T-cell (primary cell): ENCODE measurements at regions of chr2 and their contacts with region 1.

Region 1: GRCh38 chr2:100615471-100615870 is 52.7 kb downstream of the PDCL3 start:
- DNase-seq: no peak
- ATAC-seq: no peak
- H3K4me3 ChIP-seq: no peak overlapping the region
- H3K4me3 Mint-ChIP-seq: no peak overlapping the region
- H3K27ac ChIP-seq: no peak overlapping the region
- H3K27ac Mint-ChIP-seq: no peak overlapping the region
- H3K4me1 ChIP-seq: peaks cover 0 to 2% of the 10 kb centered on the region in 2 experiments
- H3K4me1 Mint-ChIP-seq: peaks cover 4 to 22% (median 8%) of the 10 kb centered on the region in 3 donors
- H3K27me3 ChIP-seq: peaks cover 0 to 13% of the 10 kb centered on the region in 2 experiments
- H3K27me3 Mint-ChIP-seq: no peaks in the 10 kb centered on the region

Region 2: DNA sequence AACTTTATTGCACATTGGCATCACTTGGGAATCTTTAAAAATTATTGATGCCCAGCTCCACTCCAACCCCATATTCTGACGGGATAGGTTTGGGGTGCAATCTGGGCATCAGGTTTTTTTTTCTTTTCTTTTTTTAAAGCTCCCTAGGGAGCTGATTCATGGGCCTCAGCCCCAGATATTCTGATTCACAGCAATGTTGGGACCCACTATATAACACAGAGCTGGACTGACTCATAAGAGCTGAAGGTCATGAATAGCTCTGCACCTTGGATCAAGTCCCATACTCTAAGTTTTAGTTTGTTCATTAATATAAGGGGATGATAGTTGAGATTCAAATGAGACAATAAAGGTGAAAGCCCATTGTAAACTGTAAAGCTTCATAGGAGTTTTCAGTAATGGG is 934.5 kb before region 1 on chr2:
- CTCF ChIA-PET with region 1: no interaction called
- POLR2A ChIA-PET with region 1: no interaction called
- DNase-seq: no peak
- ATAC-seq: no peak
- H3K4me3 ChIP-seq: no peak overlapping the region
- H3K4me3 Mint-ChIP-seq: no peak overlapping the region
- H3K27ac ChIP-seq: no peak overlapping the region
- H3K27ac Mint-ChIP-seq: no peak overlapping the region
- H3K4me1 ChIP-seq: no peaks in the 10 kb centered on the region
- H3K4me1 Mint-ChIP-seq: no peaks in the 10 kb centered on the region
- H3K27me3 ChIP-seq: peaks cover 0 to 2% of the 10 kb centered on the region in 2 experiments
- H3K27me3 Mint-ChIP-seq: no peaks in the 10 kb centered on the region

Region 3: GRCh38 chr2:100870652-100871531 is 255.4 kb after region 1 on chr2:
- CTCF ChIA-PET with region 1: no interaction called
- POLR2A ChIA-PET with region 1: no interaction called
- DNase-seq: peak in 1 of 35 experiments; percentile 9
- ATAC-seq: no peak
- H3K4me3 ChIP-seq: no peak overlapping the region
- H3K4me3 Mint-ChIP-seq: no peak overlapping the region
- H3K27ac ChIP-seq: no peak overlapping the region
- H3K27ac Mint-ChIP-seq: no peak overlapping the region
- H3K4me1 ChIP-seq: peaks cover 4% of the 10 kb centered on the region in 2 experiments
- H3K4me1 Mint-ChIP-seq: peaks cover 4 to 6% (median 5%) of the 10 kb centered on the region in 3 donors
- H3K27me3 ChIP-seq: peaks cover 0 to 5% of the 10 kb centered on the region in 2 experiments
- H3K27me3 Mint-ChIP-seq: peaks cover 0 to 6% of the 10 kb centered on the region in 2 donors

Region 4: GRCh38 chr2:101252408-101253012 is 637.0 kb after region 1 on chr2 and contains the start of gene CNOT11:
- CTCF ChIA-PET with region 1: no interaction called
- POLR2A ChIA-PET with region 1: interaction called in 1 of 2 experiments, 21 read pairs
- DNase-seq: peak; percentile 96 to 100 (median 99)
- ATAC-seq: peak; percentile 79 to 83 (median 80)
- H3K4me3 ChIP-seq: peak within 1 kb of the TSS; percentile 71 to 72
- H3K4me3 Mint-ChIP-seq: peak within 1 kb of the TSS; percentile 92 to 98 (median 97)
- H3K27ac ChIP-seq: peak within 1 kb of the TSS; percentile 91
- H3K27ac Mint-ChIP-seq: peak within 1 kb of the TSS; percentile 93 to 96
- H3K4me1 ChIP-seq: peaks cover 26 to 47% of the 10 kb centered on the region in 2 experiments
- H3K4me1 Mint-ChIP-seq: peaks cover 38 to 49% (median 49%) of the 10 kb centered on the region in 3 donors
- H3K27me3 ChIP-seq: no peaks in the 10 kb centered on the region
- H3K27me3 Mint-ChIP-seq: no peaks in the 10 kb centered on the region
- total RNA-seq, gene CNOT11: 45.8 to 52.5 (median 50.7) TPM